Left cardiac atrium (tissue), 4 donors: ENCODE measurements at regions of chr4 and their contacts with region 1.

Region 1: GRCh38 chr4:12324965-12325364 is 896.3 kb upstream of the HS3ST1 start:
- DNase-seq: no peak
- ATAC-seq: no peak

Region 2: DNA sequence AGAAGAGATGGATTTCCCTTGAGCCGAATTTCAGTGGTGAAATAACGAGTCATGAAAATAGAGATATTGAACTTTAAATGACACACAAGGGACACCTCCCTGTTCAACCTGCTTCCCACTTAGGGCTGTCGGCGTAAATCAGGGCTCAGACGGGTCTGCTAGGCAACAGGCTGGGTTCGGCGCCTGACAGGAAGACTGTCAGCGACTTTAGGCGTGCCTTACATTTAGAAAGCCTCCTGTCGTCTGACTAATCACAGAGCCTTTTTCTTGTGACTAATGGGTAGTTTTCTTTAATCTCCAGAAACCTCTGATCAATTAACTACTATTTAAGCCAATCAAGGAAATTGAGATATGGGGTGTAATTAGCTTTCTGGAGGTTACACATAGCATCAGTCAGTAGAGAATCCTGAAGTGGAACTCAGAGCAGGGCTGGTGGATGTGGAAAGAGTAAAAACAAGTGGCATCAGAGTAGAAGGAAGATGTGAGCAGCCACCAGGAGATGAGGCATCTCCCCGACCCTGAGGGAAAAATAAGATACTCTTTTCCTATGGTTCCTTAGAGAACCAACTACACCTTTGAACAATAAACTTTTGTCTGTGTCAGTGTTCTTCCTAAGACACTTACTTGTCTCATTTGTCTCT is 810.1 kb before region 1 on chr4:
- intact Hi-C with region 1: no loop called
- DNase-seq: no peak
- ATAC-seq: no peak

Region 3: GRCh38 chr4:12186526-12186925 is 138.4 kb before region 1 on chr4:
- intact Hi-C with region 1: no loop called
- DNase-seq: no peak
- ATAC-seq: no peak

Region 4: DNA sequence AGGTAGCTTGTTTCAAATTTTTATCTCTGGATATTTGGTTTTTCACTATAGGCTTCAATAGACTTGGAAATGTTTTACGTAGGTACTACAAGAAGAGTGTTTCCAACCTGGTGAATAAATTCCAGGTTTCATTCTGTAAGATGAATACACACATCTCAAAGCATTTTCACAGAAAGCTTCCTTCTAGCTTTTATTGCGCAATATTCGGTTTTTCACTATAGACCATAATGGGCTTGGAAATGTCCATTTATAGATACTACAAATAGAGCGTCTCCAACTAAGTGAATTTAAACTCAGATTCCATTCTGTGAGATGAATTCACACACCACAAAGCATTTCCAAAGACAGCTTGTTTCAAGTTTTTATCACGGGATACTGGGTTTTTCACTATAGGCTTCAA is 38.6 kb before region 1 on chr4:
- intact Hi-C with region 1: loop called in 1 of 2 experiments (anchors 2 kb)
- DNase-seq: no peak
- ATAC-seq: no peak